Dendritic cell treated with granulocyte-macrophage colony-stimulating factor and Interleukin-4, amounts not matched to agents 40 ng/mL and 50 ng/mL, for 4 days (primary cell): ENCODE measurements at regions of chr22 and their contacts with region 1.

Region 1: DNA sequence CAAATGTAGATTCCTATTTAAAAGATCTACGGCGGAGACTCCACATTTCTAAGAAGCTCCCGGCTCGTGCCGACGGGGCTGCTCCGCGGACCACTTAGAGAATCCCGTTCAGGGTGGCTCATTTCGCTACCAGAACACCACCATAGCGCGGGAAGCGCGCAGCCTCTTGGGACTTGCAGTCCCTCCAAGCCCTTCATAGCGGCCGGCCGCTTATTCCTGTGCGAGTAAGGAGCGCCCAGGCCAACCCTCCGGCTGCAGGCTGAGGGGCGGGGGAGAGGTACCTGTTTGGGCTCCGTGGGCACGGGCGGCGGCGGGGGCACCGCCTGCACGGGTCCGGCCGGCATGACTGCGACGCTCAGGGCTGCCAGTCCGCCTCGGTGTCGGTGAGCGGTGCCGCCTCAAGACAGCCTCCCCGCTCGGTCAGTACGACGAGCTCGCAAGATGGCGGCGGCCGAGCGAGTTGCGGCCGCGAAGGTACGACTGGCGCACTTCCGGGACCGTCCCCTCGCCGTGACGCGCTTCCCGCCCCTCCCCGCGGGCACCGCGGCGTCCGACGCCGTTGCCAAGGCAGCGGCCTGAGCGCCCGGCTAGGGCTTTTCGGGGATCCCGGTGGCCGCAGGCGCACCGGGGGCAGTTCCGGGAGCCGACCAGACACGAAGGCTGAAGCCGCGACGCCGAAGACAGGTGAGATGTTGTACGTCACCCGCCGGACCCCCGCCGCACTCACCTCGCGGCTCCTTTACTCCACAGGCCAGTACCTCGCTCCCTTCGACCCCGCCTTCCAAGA is at the starts of genes CCDC157 and SF3A1:
- H3K4me3 Mint-ChIP-seq: peak within 1 kb of the TSS; percentile 73
- H3K27ac Mint-ChIP-seq: peak within 1 kb of the TSS; percentile 67
- H3K4me1 Mint-ChIP-seq: peaks cover 46% of the 10 kb centered on the region
- H3K27me3 Mint-ChIP-seq: peaks cover 9% of the 10 kb centered on the region

Region 2: DNA sequence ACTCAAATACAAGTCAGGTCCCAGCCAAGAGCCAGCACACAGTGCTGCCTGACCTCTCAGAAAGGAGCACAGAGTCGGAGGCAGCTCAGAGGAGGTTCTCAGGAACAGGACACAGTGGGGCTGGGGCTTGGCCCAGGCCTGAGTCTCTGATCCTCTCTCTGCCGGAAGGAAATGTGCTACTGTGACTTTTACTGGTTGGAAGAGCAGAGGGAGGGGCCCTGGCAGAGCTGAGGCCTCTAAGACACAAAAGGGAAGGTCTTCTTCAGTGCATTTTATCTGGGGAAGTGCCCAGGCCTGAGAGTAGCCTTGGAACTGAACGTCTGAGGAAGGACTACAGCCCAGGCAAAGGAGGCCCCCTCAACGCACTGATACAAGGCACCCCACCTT is 51.1 kb before region 1 on chr22:
- intact Hi-C with region 1: loop called (anchors 1 kb)
- H3K4me3 Mint-ChIP-seq: peak overlapping the region; percentile 52
- H3K27ac Mint-ChIP-seq: peak overlapping the region; percentile 85
- H3K4me1 Mint-ChIP-seq: peaks cover 100% of the 10 kb centered on the region
- H3K27me3 Mint-ChIP-seq: no peaks in the 10 kb centered on the region

Region 3: GRCh38 chr22:30326706-30327362 is 29.8 kb before region 1 on chr22 and contains the start of gene TBC1D10A:
- intact Hi-C with region 1: loop called (anchors 2 kb)
- H3K4me3 Mint-ChIP-seq: peak within 1 kb of the TSS; percentile 86
- H3K27ac Mint-ChIP-seq: peak within 1 kb of the TSS; percentile 85
- H3K4me1 Mint-ChIP-seq: peaks cover 48% of the 10 kb centered on the region
- H3K27me3 Mint-ChIP-seq: no peaks in the 10 kb centered on the region

Region 4: DNA sequence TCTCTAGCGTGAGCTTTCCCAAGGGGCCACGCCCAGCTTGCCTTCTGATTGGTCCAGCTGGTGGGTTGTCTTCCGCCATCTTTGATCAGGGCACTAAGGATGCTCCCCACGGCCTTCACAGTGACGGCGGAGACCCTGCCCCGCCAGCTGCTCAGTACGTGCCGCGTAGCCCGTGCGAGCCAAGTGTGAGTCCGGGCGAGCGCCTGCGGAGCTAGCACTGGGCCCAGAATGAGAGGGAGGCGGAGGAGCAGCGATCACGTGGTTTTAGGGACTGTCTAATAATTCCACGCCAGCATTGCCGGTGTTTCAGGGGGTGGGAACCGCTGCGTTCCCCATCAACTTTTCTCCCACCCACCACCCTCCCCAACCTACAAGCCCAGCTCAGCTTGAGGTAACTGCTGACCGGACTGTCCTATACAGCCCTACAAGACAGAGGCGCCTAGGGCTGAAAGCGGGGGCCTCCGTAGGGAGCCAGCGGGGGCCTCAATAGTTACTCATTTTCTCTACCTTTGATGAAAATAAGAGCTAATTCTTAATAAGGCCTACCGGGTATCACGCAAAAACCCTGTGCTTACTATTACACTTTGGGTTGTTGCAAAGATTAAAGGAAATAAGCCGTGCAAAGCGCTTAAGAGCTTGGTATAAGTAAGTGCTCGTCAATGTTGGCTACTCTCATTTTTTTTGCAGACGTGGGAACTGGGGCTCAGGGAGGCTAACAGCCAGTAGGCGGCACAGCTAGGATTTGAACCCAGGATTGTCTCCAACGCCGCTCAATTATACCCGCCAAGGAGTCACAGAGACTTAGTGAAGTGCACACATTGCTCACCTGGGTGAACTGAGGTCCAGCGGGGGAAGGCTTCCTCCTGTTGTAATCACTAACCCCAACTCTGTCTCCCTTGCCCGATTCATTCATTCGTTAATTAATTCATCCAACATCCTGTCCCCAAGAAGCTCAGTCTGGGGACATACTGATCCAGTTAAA is 67.6 kb after region 1 on chr22:
- intact Hi-C with region 1: loop called (anchors 2 kb)
- H3K4me3 Mint-ChIP-seq: peak overlapping the region; percentile 88
- H3K27ac Mint-ChIP-seq: peak overlapping the region; percentile 95
- H3K4me1 Mint-ChIP-seq: peaks cover 59% of the 10 kb centered on the region
- H3K27me3 Mint-ChIP-seq: no peaks in the 10 kb centered on the region